Esophagus muscularis mucosa (tissue), 4 donors: ENCODE measurements at regions of chr14 and their contacts with region 1.

Region 1: DNA sequence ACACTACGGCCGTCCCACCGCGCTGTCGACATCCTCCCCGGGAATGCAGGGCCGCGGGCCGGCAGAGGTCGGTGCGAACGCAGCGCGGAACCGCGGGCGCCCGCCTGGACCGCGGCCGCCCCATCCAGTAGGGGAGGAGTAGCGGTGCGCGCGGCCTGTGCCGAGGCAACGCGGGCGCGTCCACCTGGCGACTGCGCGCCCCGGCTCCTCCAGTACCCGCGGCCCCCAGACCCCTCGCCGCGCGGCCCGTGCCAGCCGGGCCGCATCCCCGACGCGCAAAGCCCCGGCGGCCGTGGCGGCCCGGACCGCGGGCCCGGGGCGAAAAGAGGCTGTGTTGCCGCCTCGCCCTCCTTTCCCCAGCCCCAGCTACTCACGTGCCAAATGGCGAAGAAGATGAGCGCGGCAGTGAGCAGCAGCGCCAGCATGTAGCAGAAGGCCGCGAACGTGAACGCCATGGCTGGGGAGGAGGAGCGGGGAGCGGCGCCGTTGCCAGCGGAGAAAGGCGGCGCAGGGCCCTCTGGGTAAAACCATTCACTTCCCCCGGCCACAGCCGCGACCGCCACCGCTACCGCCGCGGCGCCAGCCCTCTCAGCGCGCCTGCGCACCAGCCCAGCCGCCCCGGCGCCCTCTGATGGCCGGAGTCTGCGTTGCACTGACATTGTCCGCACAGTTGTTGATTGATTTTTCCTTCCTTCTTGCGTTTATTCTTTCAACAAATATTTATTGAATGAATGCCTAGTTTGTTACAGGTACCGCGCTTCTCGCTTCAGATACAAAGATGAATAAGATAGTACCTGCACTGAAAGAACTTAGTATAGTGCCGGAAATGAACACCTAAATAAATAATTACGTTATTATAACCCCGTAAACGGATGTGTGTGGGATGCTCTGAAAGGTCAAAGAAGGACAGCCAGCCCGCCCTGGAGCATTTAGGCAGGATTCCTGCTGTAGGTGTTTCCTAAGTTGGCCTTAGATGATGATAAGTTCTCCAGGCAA is at the start of gene CNIH1:
- DNase-seq: peak; percentile 97
- H3K4me3 ChIP-seq: peak within 1 kb of the TSS; percentile 73 to 89 (median 82)
- H3K27ac ChIP-seq: peak within 1 kb of the TSS; percentile 89 to 97 (median 95)
- H3K4me1 ChIP-seq: peaks cover 16 to 47% (median 36%) of the 10 kb centered on the region in 4 donors
- H3K27me3 ChIP-seq: no peaks in the 10 kb centered on the region
- CTCF ChIP-seq: peak; percentile 97 to 98 (median 97)
- EP300 ChIP-seq: no peak
- POLR2A ChIP-seq: no peak
- total RNA-seq, gene CNIH1: 52.3 to 144 (median 103) TPM

Region 2: GRCh38 chr14:54396493-54397335 is 44.5 kb before region 1 on chr14 and contains the start of gene CDKN3:
- intact Hi-C with region 1: loop called (anchors 5 kb)
- DNase-seq: peak; percentile 100
- H3K4me3 ChIP-seq: peak within 1 kb of the TSS; percentile 59 to 90 (median 68)
- H3K27ac ChIP-seq: peak within 1 kb of the TSS; percentile 17 to 56 (median 42)
- H3K4me1 ChIP-seq: peaks cover 8 to 15% (median 9%) of the 10 kb centered on the region in 4 donors
- H3K27me3 ChIP-seq: no peaks in the 10 kb centered on the region
- CTCF ChIP-seq: peak; percentile 50 to 63 (median 58)
- EP300 ChIP-seq: no peak
- POLR2A ChIP-seq: peak; percentile 27
- total RNA-seq, gene CDKN3: 0.65 to 4.8 (median 1.0) TPM

Region 3: GRCh38 chr14:54488646-54489317 is 47.6 kb after region 1 on chr14 and contains the start of gene GMFB:
- intact Hi-C with region 1: loop called (anchors 2 kb)
- DNase-seq: peak; percentile 97
- H3K4me3 ChIP-seq: peak within 1 kb of the TSS; percentile 73 to 98 (median 80)
- H3K27ac ChIP-seq: peak within 1 kb of the TSS; percentile 91 to 96 (median 95)
- H3K4me1 ChIP-seq: peaks cover 28 to 49% (median 38%) of the 10 kb centered on the region in 4 donors
- H3K27me3 ChIP-seq: no peaks in the 10 kb centered on the region
- CTCF ChIP-seq: peak in 2 of 3 experiments; percentile 48 to 49
- EP300 ChIP-seq: no peak
- POLR2A ChIP-seq: peak; percentile 59
- total RNA-seq, gene GMFB: 21.4 to 49.4 (median 43.7) TPM